BJ (cell line): ENCODE measurements at regions of chr1 and their contacts with region 1.

Region 1: DNA sequence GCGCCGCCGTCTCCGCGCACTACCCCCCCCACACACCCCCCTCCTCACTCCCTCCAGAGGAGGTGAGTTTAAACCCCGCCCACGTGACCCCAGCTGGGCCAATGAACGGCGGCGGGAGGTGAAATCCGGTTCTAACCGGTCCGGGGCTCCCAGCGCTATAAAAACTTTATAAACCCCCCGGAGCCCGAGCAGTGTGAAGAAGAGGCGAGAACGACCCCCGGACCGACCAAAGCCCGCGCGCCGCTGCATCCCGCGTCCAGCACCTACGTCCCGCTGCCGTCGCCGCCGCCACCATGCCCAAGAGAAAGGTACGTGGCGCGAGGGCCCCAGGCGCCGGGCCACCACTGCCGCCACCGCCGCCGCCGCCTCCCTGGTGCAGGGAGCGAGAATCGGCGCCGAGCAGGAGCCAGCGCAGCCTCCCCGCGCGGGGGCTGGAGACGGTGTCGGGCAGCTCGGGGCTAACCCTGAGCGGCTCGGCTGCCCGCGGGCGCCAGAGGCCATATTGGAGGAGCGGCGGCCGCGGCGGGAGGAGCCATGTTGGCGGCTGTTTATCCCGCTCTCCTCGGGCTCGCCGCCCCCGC is at the start of gene HMGN2:
- DNase-seq: peak; percentile 31
- H3K4me3 ChIP-seq: peak within 1 kb of the TSS; percentile 86
- H3K27me3 ChIP-seq: no peaks in the 10 kb centered on the region
- CTCF ChIP-seq: no peak
- polyA plus RNA-seq, gene HMGN2: 252 and 268 TPM in 2 replicates

Region 2: GRCh38 chr1:26097696-26098095 is 374.7 kb before region 1 on chr1:
- CTCF ChIA-PET with region 1: no interaction called
- POLR2A ChIA-PET with region 1: interaction called, 17 read pairs
- DNase-seq: no peak
- H3K4me3 ChIP-seq: no peak overlapping the region
- H3K27me3 ChIP-seq: peaks cover 8% of the 10 kb centered on the region
- CTCF ChIP-seq: no peak

Region 3: DNA sequence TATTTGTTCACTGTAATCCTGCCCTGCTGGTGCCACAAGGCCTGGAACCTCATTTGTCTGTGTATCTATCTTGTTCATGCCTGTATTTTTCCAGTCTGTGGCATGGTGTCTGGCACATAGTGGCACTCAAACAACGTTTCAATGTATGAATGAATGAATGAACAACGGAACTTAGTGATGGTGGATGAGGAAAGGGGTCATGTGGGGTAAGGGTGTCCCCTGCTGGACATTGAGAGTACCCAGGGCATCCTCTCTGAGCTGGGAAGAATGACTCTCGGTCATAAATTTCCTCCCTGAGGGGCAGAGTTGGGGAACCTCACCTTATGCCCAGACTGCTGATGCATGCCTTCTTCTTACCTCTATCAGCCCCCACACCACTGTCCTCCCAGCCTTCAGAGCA is 81.0 kb before region 1 on chr1:
- CTCF ChIA-PET with region 1: no interaction called
- POLR2A ChIA-PET with region 1: no interaction called
- DNase-seq: no peak
- H3K4me3 ChIP-seq: no peak overlapping the region
- H3K27me3 ChIP-seq: 0 out of 2 replicates have a peak, but pooled peaks cover 1% of the 10 kb centered on the region
- CTCF ChIP-seq: peak; percentile 89

Region 4: DNA sequence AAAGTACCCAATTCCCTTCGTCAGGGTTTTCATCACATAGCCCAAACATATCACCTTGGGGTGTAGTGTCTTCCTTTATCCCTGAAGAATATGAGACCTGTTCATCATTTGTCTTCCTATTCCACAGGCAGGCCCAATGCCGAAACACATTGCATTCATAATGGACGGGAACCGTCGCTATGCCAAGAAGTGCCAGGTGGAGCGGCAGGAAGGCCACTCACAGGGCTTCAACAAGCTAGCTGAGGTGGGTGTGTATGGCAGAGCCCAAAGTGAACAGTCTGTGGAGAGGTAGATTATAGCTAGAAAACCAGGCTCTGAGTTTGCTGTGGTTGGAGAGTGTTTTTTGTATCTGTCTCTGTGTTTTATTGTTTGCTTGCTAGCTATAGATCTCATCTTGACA is 34.4 kb before region 1 on chr1:
- CTCF ChIA-PET with region 1: no interaction called
- POLR2A ChIA-PET with region 1: no interaction called
- DNase-seq: no peak
- H3K4me3 ChIP-seq: no peak overlapping the region
- H3K27me3 ChIP-seq: no peaks in the 10 kb centered on the region
- CTCF ChIP-seq: no peak

Region 5: GRCh38 chr1:26449868-26450267 is 22.5 kb before region 1 on chr1:
- CTCF ChIA-PET with region 1: interaction called, 13 read pairs
- POLR2A ChIA-PET with region 1: no interaction called
- DNase-seq: no peak
- H3K4me3 ChIP-seq: no peak overlapping the region
- H3K27me3 ChIP-seq: no peaks in the 10 kb centered on the region
- CTCF ChIP-seq: no peak

Region 6: DNA sequence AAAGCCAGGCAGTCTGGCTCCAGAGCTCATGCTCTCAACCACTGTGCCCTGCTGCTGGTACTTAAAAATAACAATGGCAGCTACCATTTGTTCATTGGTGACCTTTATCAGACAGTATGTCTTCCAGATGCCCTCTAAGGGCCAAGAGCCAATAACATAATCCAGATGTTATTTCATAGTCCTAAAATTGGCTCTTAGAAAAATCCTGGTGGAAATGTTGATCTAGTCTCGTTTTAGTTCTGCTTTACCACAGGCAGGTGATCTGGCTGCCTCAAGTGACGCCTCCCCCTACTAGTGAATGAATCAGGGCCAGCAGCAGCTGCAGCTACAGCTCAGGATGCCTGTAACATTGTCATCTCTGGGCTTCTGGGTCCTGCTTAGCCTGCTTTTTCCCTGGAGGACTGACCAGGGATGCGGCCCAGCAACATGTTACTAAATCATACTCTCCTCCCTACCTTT is 12.8 kb before region 1 on chr1:
- CTCF ChIA-PET with region 1: interaction called, 12 read pairs
- POLR2A ChIA-PET with region 1: no interaction called
- DNase-seq: no peak
- H3K4me3 ChIP-seq: no peak overlapping the region
- H3K27me3 ChIP-seq: no peaks in the 10 kb centered on the region
- CTCF ChIP-seq: no peak

Region 7: GRCh38 chr1:26482921-26483680 is 10.7 kb after region 1 on chr1:
- CTCF ChIA-PET with region 1: no interaction called
- POLR2A ChIA-PET with region 1: no interaction called
- DNase-seq: no peak
- H3K4me3 ChIP-seq: no peak overlapping the region
- H3K27me3 ChIP-seq: no peaks in the 10 kb centered on the region
- CTCF ChIP-seq: no peak